ENCODE measurements at regions of chr6 and their contacts with region 1.

Region 1: DNA sequence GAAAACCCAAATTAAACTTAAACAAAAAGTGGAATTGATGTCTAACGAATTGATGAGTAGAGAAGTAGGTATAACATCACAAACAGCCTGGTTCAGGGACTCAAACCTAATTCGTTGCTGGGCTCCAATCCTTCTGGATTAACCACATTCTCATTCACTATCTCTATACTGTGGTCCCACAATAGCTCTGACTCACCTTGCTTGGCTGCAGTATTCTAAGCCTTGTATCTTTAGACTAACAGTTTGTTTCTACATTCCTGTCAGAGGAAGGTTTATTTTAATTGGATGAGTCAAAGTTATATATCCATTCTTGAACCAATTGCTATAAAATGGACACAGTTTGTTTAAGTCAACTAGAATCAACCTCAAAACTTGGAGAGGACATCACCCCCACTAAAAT is 530.5 kb upstream of the PTCHD4 start:
- DNase-seq: no peak
- H3K4me3 ChIP-seq: no peak overlapping the region
- H3K4me3 Mint-ChIP-seq: no peak overlapping the region
- H3K27ac ChIP-seq: no peak overlapping the region
- H3K27ac Mint-ChIP-seq: no peak overlapping the region
- H3K4me1 ChIP-seq: no peaks in the 10 kb centered on the region
- H3K4me1 Mint-ChIP-seq: no peaks in the 10 kb centered on the region
- H3K27me3 ChIP-seq: no peaks in the 10 kb centered on the region
- H3K27me3 Mint-ChIP-seq: no peaks in the 10 kb centered on the region
- CTCF ChIP-seq: no peak

Region 2: GRCh38 chr6:47535316-47536225 is 1106.0 kb before region 1 on chr6:
- intact Hi-C with region 1: no loop called
- DNase-seq: no peak
- H3K4me3 ChIP-seq: no peak overlapping the region
- H3K4me3 Mint-ChIP-seq: no peak overlapping the region
- H3K27ac ChIP-seq: no peak overlapping the region
- H3K27ac Mint-ChIP-seq: no peak overlapping the region
- H3K4me1 ChIP-seq: no peaks in the 10 kb centered on the region
- H3K4me1 Mint-ChIP-seq: no peaks in the 10 kb centered on the region
- H3K27me3 ChIP-seq: no peaks in the 10 kb centered on the region
- H3K27me3 Mint-ChIP-seq: no peaks in the 10 kb centered on the region
- CTCF ChIP-seq: no peak

Region 3: DNA sequence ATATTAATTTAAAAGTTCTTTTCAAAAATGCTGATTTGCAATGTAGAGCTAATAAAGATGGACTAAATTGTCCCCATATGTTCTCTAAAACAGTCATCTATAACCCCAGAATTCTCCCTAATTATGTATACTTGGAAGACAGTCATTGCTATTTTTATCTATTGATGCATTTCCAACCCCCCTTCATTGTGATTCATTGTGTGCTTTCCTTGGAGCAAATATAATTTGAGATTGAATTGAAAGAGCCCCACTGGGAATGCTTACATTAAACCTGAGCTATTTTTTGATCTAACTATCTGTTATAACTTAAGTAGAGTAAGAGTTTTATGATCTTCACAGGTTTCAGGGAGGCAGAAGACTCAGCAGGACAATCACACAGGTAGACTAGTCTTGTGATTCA is 456.9 kb before region 1 on chr6:
- intact Hi-C with region 1: loop called in 1 of 2 experiments (anchors 5 kb)
- DNase-seq: no peak
- H3K4me3 ChIP-seq: no peak overlapping the region
- H3K4me3 Mint-ChIP-seq: no peak overlapping the region
- H3K27ac ChIP-seq: no peak overlapping the region
- H3K27ac Mint-ChIP-seq: no peak overlapping the region
- H3K4me1 ChIP-seq: no peaks in the 10 kb centered on the region
- H3K4me1 Mint-ChIP-seq: no peaks in the 10 kb centered on the region
- H3K27me3 ChIP-seq: no peaks in the 10 kb centered on the region
- H3K27me3 Mint-ChIP-seq: no peaks in the 10 kb centered on the region
- CTCF ChIP-seq: no peak

Region 4: DNA sequence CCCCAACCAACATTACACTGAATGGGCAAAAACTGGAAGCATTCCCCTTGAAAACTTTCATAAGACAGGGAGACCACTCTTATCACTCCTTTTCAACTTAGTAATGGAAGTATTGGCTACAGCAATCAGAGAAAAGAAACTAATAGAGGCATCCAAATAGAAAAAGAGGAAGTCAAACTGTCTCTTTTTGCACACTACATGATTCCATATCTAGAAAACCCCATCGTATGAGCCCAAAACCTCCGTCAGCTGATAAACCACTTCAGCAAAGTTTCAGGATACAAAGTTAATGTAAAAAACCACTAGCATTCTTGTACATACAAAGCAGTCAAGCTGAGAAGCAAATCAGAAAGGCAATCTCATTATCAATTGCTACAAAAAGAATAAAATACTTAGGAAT is 49.9 kb after region 1 on chr6:
- intact Hi-C with region 1: no loop called
- DNase-seq: no peak
- H3K4me3 ChIP-seq: no peak overlapping the region
- H3K4me3 Mint-ChIP-seq: no peak overlapping the region
- H3K27ac ChIP-seq: no peak overlapping the region
- H3K27ac Mint-ChIP-seq: no peak overlapping the region
- H3K4me1 ChIP-seq: no peaks in the 10 kb centered on the region
- H3K4me1 Mint-ChIP-seq: no peaks in the 10 kb centered on the region
- H3K27me3 ChIP-seq: no peaks in the 10 kb centered on the region
- H3K27me3 Mint-ChIP-seq: no peaks in the 10 kb centered on the region
- CTCF ChIP-seq: no peak

Region 5: DNA sequence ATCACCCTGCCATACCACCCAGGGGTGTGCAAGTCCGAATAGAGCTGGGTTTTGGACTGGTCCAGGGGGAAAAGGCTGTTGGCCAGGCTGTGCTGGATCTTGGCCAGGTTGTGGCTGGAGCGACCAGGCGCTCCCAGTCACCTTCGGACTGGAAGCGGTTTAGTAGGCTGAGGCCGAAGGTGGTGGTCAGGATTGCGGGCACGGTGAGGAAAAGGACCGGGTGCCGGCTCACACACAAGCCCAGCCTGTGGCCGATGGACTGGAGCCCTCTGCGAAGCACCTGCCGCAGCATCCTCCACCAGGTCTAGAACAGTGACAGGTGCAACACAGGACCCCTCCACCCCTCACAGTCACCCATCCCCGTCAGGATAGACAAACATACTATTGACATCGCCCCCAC is 60.0 kb after region 1 on chr6:
- intact Hi-C with region 1: no loop called
- DNase-seq: no peak
- H3K4me3 ChIP-seq: no peak overlapping the region
- H3K4me3 Mint-ChIP-seq: no peak overlapping the region
- H3K27ac ChIP-seq: no peak overlapping the region
- H3K27ac Mint-ChIP-seq: no peak overlapping the region
- H3K4me1 ChIP-seq: no peaks in the 10 kb centered on the region
- H3K4me1 Mint-ChIP-seq: no peaks in the 10 kb centered on the region
- H3K27me3 ChIP-seq: no peaks in the 10 kb centered on the region
- H3K27me3 Mint-ChIP-seq: peaks cover 1 to 2% (median 2%) of the 10 kb centered on the region in 3 donors
- CTCF ChIP-seq: no peak

Measured in CD14-positive monocyte (primary cell).